ENCODE measurements at regions of chr17 and their contacts with region 1.

Region 1: GRCh38 chr17:64420143-64420971 is 28.6 kb upstream of the MILR1 start:
- DNase-seq: no peak
- ATAC-seq: peak; percentile 91
- H3K4me3 ChIP-seq: no peak overlapping the region
- H3K27ac ChIP-seq: no peak overlapping the region
- H3K4me1 ChIP-seq: no peaks in the 10 kb centered on the region
- H3K27me3 ChIP-seq: no peaks in the 10 kb centered on the region
- CTCF ChIP-seq: peak; percentile 66 to 72 (median 69)
- EP300 ChIP-seq: no peak
- POLR2A ChIP-seq: no peak
- RAD21 ChIP-seq: peak; percentile 91

Region 2: GRCh38 chr17:64326395-64327054 is 93.8 kb before region 1 on chr17:
- CTCF ChIA-PET with region 1: interaction called, 627 read pairs
- POLR2A ChIA-PET with region 1: interaction called, 5 read pairs
- RAD21 ChIA-PET with region 1: interaction called, 75 read pairs
- SMC1A ChIA-PET with region 1: interaction called, 190 read pairs
- in situ Hi-C with region 1: loop called (anchors 5 kb)
- intact Hi-C with region 1: loop called (anchors 1 kb)
- DNase-seq: no peak
- ATAC-seq: peak; percentile 80
- H3K4me3 ChIP-seq: no peak overlapping the region
- H3K27ac ChIP-seq: no peak overlapping the region
- H3K4me1 ChIP-seq: peaks cover 3% of the 10 kb centered on the region; the same call in 1 of the 2 replicates
- H3K27me3 ChIP-seq: no peaks in the 10 kb centered on the region
- CTCF ChIP-seq: no peak
- EP300 ChIP-seq: no peak
- POLR2A ChIP-seq: no peak
- RAD21 ChIP-seq: no peak

Region 3: DNA sequence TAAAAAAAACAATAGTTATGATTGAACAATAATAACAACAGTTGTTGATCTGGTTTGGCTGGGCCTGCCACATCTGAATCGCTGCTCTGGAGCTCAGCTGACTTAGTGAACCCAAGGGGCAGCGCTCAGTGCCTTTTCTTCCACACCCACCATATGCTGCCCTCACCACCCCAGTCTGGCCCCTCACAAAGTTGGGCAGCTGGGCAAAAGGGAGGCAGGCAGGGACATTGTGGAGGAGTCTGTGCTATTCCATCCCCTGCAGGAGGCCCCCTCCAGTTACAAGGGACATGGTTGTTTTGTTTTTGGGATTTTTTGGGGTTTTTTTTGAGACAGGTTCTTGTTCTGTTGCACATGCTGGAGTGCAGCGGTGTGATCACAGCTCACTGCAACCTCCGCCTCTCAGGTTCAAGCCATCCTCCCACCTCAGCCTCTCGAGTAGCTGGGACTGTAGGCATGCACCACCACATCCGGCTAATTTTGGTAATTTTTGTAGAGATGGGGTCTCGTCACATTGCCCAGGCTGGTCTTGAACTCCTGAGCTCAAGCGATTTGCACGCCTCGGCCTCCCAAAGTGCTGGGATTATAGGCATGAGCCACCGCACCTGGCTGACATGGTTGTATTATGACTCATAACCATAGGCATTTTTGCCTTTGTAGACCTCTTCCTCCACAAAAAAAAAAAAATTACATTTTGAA is 21.1 kb before region 1 on chr17:
- CTCF ChIA-PET with region 1: interaction called, 22 read pairs
- POLR2A ChIA-PET with region 1: no interaction called
- RAD21 ChIA-PET with region 1: interaction called, 15 read pairs
- SMC1A ChIA-PET with region 1: interaction called, 11 read pairs
- in situ Hi-C with region 1: no loop called
- intact Hi-C with region 1: no loop called
- DNase-seq: no peak
- ATAC-seq: no peak
- H3K4me3 ChIP-seq: no peak overlapping the region
- H3K27ac ChIP-seq: no peak overlapping the region; the same call in 1 of the 2 replicates
- H3K4me1 ChIP-seq: peaks cover 34% of the 10 kb centered on the region
- H3K27me3 ChIP-seq: no peaks in the 10 kb centered on the region
- CTCF ChIP-seq: no peak
- EP300 ChIP-seq: no peak
- POLR2A ChIP-seq: no peak
- RAD21 ChIP-seq: no peak

Region 4: DNA sequence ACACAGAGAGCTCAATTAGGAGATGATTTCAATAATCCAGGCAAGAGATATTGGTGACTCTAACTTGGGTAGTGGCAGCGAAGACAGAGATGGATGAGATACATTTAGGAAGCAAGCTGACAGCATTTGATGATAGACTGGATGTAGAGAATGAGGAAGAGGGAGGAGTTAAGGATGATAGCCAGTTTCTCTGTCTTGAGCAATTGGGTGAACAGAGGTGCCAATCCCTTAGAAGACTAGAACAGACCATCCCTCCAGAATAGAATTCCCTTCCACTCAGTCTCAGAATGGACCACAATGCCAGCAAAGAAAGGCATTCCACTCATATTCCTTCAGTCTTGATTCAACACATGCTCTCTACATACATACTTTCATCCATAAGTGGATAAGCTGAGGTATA is 59.3 kb after region 1 on chr17:
- CTCF ChIA-PET with region 1: interaction called, 27 read pairs
- POLR2A ChIA-PET with region 1: no interaction called
- RAD21 ChIA-PET with region 1: interaction called, 7 read pairs
- SMC1A ChIA-PET with region 1: interaction called, 21 read pairs
- in situ Hi-C with region 1: no loop called
- intact Hi-C with region 1: no loop called
- DNase-seq: no peak
- ATAC-seq: no peak
- H3K4me3 ChIP-seq: no peak overlapping the region
- H3K27ac ChIP-seq: no peak overlapping the region
- H3K4me1 ChIP-seq: no peaks in the 10 kb centered on the region
- H3K27me3 ChIP-seq: no peaks in the 10 kb centered on the region
- CTCF ChIP-seq: no peak
- EP300 ChIP-seq: no peak
- POLR2A ChIP-seq: no peak
- RAD21 ChIP-seq: no peak

Region 5: DNA sequence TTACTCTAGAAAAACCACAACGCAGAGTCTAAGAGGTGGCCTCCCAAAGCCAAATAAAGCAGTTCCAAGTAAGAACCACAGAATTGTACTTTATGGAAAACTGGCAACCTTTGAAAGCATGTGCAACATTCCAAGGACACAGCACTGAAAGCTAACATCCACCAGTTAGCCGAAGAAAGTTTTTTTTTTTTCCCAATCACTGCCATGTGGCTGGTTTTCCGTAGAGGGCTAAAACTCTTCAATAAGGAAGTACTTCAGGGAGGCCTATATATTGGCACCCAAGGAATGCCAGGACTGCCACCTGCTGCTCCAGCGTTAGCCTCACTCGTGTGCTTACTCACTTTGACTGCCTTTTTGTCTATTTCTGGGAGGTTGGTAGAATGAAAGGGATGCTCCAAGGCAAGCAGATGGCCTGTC is 111.6 kb after region 1 on chr17:
- CTCF ChIA-PET with region 1: interaction called, 10 read pairs
- POLR2A ChIA-PET with region 1: no interaction called
- RAD21 ChIA-PET with region 1: interaction called, 6 read pairs
- SMC1A ChIA-PET with region 1: interaction called, 9 read pairs
- in situ Hi-C with region 1: no loop called
- intact Hi-C with region 1: no loop called
- DNase-seq: no peak
- ATAC-seq: no peak
- H3K4me3 ChIP-seq: no peak overlapping the region
- H3K27ac ChIP-seq: no peak overlapping the region
- H3K4me1 ChIP-seq: no peaks in the 10 kb centered on the region
- H3K27me3 ChIP-seq: no peaks in the 10 kb centered on the region
- CTCF ChIP-seq: no peak
- EP300 ChIP-seq: no peak
- POLR2A ChIP-seq: no peak
- RAD21 ChIP-seq: no peak

Region 6: DNA sequence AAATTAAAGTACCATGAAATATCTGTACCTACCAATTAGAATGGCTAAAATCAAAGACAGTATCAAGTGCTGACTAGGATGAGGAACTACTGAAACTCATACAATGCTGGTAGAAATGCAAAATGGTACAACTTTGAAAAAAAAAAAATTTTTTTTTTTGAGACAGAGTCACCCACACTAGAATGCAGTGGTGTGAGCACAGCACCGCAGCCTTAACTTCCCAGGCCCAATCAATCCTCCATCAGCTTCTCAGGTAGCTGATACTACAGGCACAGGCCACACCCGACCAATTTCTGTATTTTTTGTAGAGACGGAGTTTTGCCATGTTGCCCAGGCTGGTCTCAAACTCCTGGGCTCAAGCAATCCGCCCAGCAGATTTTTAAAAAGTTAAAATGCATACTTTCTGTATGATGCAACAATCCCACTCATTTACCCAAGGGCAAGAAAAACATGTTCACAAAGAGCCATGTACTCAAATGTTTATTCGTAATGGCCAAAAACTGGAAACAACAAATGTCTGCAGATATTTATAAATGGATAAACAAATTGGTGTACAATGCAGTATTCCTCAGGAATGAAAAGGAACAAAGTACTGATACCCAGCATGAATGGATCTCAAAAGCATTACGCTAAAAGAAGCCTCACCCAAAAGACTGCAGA is 233.1 kb after region 1 on chr17:
- CTCF ChIA-PET with region 1: interaction called, 122 read pairs
- POLR2A ChIA-PET with region 1: interaction called, 3 read pairs
- RAD21 ChIA-PET with region 1: interaction called, 100 read pairs
- SMC1A ChIA-PET with region 1: interaction called, 133 read pairs
- in situ Hi-C with region 1: loop called (anchors 5 kb)
- intact Hi-C with region 1: loop called (anchors 1 kb)
- DNase-seq: no peak
- ATAC-seq: no peak
- H3K4me3 ChIP-seq: no peak overlapping the region
- H3K27ac ChIP-seq: no peak overlapping the region
- H3K4me1 ChIP-seq: peaks cover 6% of the 10 kb centered on the region
- H3K27me3 ChIP-seq: no peaks in the 10 kb centered on the region
- CTCF ChIP-seq: no peak
- EP300 ChIP-seq: no peak
- POLR2A ChIP-seq: no peak
- RAD21 ChIP-seq: no peak